ENCODE measurements at regions of chr18 and their contacts with region 1.

Region 1: GRCh38 chr18:12408247-12408869 is 629 bp downstream of the PRELID3A start:
- DNase-seq: no peak
- ATAC-seq: peak; percentile 8
- H3K4me3 Mint-ChIP-seq: peak overlapping the region; percentile 76
- H3K27ac Mint-ChIP-seq: peak overlapping the region; percentile 68
- H3K4me1 Mint-ChIP-seq: peaks cover 18% of the 10 kb centered on the region
- H3K27me3 Mint-ChIP-seq: peaks cover 7% of the 10 kb centered on the region
- CTCF ChIP-seq: no peak

Region 2: DNA sequence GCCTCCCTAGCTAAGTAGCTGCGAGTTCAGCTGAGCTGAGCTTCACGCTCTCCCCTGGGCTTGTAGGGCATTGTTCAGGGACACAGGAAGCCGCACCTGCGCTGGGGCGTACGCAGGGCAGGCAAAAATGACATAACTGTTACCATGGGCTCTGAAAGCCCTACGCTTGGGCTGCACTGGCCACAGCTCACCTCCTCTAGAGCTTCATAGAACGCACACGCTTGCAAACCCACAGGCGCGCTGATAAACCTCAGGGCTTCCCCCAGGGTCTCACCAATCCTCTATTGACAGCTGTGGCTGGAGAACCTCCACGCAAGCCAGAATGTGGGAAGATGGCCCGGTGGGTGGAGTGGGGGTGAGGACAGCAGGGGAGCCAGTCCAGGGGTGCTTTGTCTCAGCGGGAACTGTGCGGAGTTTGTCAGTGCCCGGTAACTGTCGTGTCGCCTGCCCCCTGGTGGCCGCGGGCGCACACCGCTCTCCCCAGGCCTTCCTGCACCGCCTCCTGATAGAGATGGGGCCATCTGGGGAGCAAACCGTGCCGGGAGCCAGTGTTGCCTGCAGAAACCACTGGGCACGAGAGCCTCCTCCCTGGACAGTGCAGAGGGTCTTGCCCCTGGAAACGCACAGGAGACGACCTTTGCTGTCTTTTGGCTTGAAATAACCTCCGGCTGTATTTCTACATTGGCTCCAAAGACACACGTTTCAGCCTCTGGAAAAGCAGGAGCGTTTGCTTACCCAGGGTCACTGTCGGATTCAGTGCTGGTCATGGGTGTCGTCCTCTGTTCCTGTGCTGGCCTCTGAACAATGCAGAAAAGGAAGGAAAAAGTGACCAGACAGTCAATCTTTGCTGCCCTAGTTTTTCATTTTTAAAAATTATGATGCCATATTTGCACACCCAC is 171.2 kb before region 1 on chr18:
- CTCF ChIA-PET with region 1: no interaction called
- POLR2A ChIA-PET with region 1: no interaction called
- intact Hi-C with region 1: no loop called
- DNase-seq: peak; percentile 68
- ATAC-seq: peak; percentile 93
- H3K4me3 Mint-ChIP-seq: peak overlapping the region; percentile 25
- H3K27ac Mint-ChIP-seq: no peak overlapping the region
- H3K4me1 Mint-ChIP-seq: peaks cover 7% of the 10 kb centered on the region
- H3K27me3 Mint-ChIP-seq: peaks cover 20% of the 10 kb centered on the region
- CTCF ChIP-seq: no peak

Region 3: DNA sequence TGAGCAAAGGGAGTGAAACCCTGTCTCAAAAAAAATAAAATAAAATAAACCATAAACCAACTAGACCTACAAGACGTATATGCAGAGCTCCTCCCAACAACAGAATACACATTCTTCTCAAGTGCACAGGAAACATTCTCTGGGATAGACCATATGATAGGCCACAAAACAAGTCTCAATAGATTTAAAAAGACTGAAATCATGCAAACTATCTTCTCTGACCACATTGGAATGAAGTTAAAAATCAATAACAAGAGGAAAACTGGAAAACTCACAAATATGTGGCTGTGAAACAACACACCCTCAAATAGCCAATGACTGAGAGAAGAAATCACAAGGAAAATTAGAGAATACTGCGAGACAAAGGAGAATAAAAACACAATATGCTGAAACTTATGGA is 24.1 kb before region 1 on chr18:
- CTCF ChIA-PET with region 1: no interaction called
- POLR2A ChIA-PET with region 1: no interaction called
- intact Hi-C with region 1: no loop called
- DNase-seq: no peak
- ATAC-seq: no peak
- H3K4me3 Mint-ChIP-seq: no peak overlapping the region
- H3K27ac Mint-ChIP-seq: no peak overlapping the region
- H3K4me1 Mint-ChIP-seq: no peaks in the 10 kb centered on the region
- H3K27me3 Mint-ChIP-seq: peaks cover 2% of the 10 kb centered on the region
- CTCF ChIP-seq: no peak

Region 4: DNA sequence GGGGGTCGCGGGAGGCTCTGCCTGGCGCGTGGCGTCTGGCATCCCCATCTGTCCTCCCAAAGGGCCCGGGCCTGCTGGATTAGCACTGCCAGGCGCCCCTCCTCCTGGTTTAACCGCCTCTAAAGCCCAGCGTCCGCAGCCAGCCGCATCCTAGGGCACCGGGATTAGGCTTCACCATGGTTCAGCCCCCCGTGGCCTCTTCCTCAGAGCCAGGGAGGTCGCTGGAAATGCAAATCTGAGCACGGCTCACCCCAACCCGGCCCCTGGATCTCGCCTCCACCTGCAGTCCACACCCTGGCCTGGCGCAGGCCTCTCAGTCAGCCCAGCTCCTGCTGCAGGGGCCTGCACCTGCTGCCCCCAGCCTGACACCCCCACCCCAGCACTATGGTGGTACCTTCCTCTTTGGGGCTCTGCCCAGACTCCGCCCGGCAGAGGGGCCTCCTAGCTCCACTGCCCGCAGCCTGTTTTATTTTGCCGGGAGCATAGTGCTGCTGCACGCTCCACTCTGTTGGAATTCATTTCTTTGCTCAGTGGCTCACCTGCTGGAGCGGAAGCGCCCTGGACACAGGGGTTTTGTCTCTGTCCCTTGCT is 12.6 kb after region 1 on chr18:
- CTCF ChIA-PET with region 1: no interaction called
- POLR2A ChIA-PET with region 1: no interaction called
- intact Hi-C with region 1: loop called (anchors 1 kb)
- DNase-seq: no peak
- ATAC-seq: no peak
- H3K4me3 Mint-ChIP-seq: peak overlapping the region; percentile 69
- H3K27ac Mint-ChIP-seq: no peak overlapping the region
- H3K4me1 Mint-ChIP-seq: peaks cover 15% of the 10 kb centered on the region
- H3K27me3 Mint-ChIP-seq: no peaks in the 10 kb centered on the region
- CTCF ChIP-seq: no peak

Region 5: GRCh38 chr18:13112982-13113381 is 704.6 kb after region 1 on chr18:
- CTCF ChIA-PET with region 1: no interaction called
- POLR2A ChIA-PET with region 1: no interaction called
- intact Hi-C with region 1: no loop called
- DNase-seq: no peak
- ATAC-seq: no peak
- H3K4me3 Mint-ChIP-seq: no peak overlapping the region
- H3K27ac Mint-ChIP-seq: no peak overlapping the region
- H3K4me1 Mint-ChIP-seq: no peaks in the 10 kb centered on the region
- H3K27me3 Mint-ChIP-seq: no peaks in the 10 kb centered on the region
- CTCF ChIP-seq: no peak